HEK293T (cell line): ENCODE measurements at regions of chrX and their contacts with region 1.

Region 1: GRCh38 chrX:150772150-150772970 is 79.2 kb downstream of the MTMR1 start:
- DNase-seq: peak; percentile 90

Region 2: DNA sequence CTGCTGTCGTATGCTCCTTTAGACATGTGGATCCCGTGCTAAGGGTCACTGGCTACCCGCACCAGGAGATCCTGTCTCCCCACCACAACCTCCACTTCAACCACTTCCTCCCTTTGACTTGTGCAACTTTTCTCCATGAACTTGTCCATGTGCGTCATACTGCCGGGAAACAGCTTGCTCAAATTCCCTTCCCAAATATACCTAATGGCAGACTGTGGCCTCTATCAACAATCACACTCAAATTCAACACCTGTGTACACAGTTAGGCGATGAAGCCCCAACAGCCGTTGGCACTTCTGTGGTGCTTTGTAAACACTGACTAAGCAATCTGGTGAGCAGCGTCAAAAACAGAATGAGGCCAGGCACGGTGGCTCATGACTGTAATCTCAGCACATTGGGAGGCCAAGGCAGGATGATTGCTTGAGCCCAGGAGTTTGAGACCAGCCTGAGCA is 76.6 kb after region 1 on chrX:
- CTCF ChIA-PET with region 1: no interaction called
- POLR2A ChIA-PET with region 1: no interaction called
- DNase-seq: no peak

Region 3: GRCh38 chrX:151082076-151082948 is 310.0 kb after region 1 on chrX:
- CTCF ChIA-PET with region 1: interaction called, 52 read pairs
- POLR2A ChIA-PET with region 1: interaction called, 3 read pairs
- DNase-seq: peak; percentile 86